ENCODE measurements at regions of chr1 and their contacts with region 1.

Region 1: DNA sequence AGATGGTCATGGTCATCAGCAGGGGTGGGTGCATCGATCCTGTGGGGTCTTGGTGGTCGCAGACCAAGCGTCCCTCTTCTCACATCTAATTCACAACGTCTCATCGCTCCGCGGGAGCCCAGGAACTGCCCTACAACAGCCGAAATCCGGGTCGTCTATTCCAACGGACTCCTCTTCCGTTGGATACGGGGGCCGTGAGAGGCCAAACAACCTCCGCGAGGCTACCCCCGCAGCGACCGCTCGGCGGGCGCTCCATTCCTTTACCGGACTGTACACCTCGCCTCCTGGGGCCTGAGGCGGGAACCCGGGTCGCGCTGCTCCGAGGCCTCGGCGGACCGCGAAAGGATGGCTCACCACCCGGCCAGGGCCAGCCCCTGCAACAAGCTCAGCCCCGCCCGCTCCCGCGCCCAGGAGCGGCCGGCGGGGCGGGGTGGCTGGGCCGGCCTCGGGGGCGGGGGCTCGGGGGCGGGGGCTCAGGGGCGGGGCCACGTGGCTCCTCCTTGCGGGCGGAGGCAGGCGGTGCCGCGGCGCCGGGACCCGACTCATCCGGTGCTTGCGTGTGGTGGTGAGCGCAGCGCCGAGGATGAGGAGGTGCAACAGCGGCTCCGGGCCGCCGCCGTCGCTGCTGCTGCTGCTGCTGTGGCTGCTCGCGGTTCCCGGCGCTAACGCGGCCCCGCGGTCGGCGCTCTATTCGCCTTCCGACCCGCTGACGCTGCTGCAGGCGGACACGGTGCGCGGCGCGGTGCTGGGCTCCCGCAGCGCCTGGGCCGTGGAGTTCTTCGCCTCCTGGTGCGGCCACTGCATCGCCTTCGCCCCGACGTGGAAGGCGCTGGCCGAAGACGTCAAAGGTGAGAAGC is at the start of gene QSOX1:
- DNase-seq: peak; percentile 86
- H3K4me3 Mint-ChIP-seq: peak within 1 kb of the TSS; percentile 89
- H3K27ac Mint-ChIP-seq: peak within 1 kb of the TSS; percentile 90
- H3K4me1 Mint-ChIP-seq: peaks cover 36% of the 10 kb centered on the region
- H3K27me3 Mint-ChIP-seq: peaks cover 3% of the 10 kb centered on the region
- total RNA-seq, gene QSOX1: 58.7 and 62.6 TPM in 2 replicates

Region 2: GRCh38 chr1:179954493-179955297 is 199.9 kb before region 1 on chr1 and contains the start of gene CEP350:
- intact Hi-C with region 1: loop called (anchors 5 kb)
- DNase-seq: peak; percentile 98
- H3K4me3 Mint-ChIP-seq: peak within 1 kb of the TSS; percentile 87
- H3K27ac Mint-ChIP-seq: peak within 1 kb of the TSS; percentile 98
- H3K4me1 Mint-ChIP-seq: peaks cover 34% of the 10 kb centered on the region
- H3K27me3 Mint-ChIP-seq: no peaks in the 10 kb centered on the region
- total RNA-seq, gene CEP350: 41.2 and 43.7 TPM in 2 replicates

Region 3: DNA sequence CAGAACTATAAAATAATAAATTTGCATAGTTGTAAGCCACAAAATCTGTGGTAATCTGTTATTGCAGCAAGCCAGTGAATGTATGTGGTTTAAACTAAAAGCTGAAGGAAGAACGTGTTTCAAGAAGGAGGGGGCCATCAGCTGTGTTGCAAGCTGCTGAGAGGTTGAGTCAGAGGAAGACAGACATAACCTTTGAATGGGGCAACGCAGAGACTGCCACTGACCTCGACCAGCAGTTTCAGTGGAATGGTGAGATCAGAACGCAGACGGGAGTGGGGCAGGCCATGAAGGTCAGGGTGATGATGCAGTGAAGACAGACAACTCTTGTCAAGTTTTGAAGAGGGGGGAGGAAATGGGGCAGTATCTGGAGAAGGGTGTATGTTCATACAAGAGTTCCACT is 23.0 kb before region 1 on chr1:
- intact Hi-C with region 1: loop called (anchors 1 kb)
- DNase-seq: no peak
- H3K4me3 Mint-ChIP-seq: no peak overlapping the region
- H3K27ac Mint-ChIP-seq: peak overlapping the region; percentile 45
- H3K4me1 Mint-ChIP-seq: peaks cover 12% of the 10 kb centered on the region
- H3K27me3 Mint-ChIP-seq: peaks cover 12% of the 10 kb centered on the region

Region 4: GRCh38 chr1:180213401-180214170 is 59.0 kb after region 1 on chr1:
- intact Hi-C with region 1: loop called (anchors 5 kb)
- DNase-seq: peak; percentile 50
- H3K4me3 Mint-ChIP-seq: no peak overlapping the region
- H3K27ac Mint-ChIP-seq: no peak overlapping the region
- H3K4me1 Mint-ChIP-seq: peaks cover 10% of the 10 kb centered on the region
- H3K27me3 Mint-ChIP-seq: peaks cover 11% of the 10 kb centered on the region

Measured in activated T-helper 2 cell treated with anti-CD3 and anti-CD28 coated beads, Interferon-gamma antibody, Interleukin-2, Interleukin-4, amounts not matched to agents 10 μg/mL and 5 μg/mL and 100 μg/mL, durations not matched to agents 14 hours and 24 hours and 36 hours (primary cell).